ENCODE measurements at regions of chr17 and their contacts with region 1.

Region 1: DNA sequence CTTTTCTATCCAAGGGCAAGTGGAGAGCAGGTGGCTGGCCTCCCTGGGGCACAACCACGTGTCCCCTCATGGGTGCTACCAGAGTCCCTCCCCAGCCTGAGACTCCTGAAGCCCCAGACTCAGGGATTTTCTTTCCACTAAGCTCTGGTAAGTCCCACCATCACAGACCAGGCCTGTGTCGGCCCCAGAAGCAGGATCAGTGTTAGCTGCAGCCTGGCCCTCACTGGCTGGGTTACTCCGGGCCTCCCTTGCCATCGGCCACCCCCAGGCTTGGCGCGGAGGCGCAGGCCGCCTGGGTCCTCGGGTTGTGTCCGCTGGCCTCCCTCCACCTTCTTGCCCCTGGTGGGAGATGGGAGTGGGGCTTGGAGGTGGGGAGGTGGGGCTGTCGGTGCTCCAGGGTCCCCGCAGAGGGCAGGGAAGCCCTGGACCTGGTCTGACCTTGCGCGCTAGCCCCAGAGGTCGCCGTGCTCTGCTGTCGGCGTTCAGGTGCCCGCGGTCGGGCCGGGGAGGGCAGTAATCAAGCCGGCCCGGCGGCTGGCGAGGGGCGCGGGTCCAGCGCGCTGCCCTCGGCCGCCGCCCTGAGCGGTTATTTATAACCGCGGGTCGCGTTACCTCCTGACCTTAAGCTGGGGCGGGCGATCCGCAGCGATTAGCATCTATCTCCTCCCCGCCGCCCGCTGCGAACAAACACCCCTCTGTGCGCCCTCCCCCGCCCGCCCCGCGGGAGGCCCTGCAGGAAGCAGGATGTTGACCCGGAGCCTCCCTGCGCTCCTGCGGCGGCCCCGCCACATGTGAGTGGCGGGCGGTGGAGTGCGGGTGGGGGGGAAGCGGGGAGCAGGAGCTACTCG is 78.1 kb upstream of the TOB1 start:
- DNase-seq: peak; percentile 88
- ATAC-seq: peak; percentile 79

Region 2: DNA sequence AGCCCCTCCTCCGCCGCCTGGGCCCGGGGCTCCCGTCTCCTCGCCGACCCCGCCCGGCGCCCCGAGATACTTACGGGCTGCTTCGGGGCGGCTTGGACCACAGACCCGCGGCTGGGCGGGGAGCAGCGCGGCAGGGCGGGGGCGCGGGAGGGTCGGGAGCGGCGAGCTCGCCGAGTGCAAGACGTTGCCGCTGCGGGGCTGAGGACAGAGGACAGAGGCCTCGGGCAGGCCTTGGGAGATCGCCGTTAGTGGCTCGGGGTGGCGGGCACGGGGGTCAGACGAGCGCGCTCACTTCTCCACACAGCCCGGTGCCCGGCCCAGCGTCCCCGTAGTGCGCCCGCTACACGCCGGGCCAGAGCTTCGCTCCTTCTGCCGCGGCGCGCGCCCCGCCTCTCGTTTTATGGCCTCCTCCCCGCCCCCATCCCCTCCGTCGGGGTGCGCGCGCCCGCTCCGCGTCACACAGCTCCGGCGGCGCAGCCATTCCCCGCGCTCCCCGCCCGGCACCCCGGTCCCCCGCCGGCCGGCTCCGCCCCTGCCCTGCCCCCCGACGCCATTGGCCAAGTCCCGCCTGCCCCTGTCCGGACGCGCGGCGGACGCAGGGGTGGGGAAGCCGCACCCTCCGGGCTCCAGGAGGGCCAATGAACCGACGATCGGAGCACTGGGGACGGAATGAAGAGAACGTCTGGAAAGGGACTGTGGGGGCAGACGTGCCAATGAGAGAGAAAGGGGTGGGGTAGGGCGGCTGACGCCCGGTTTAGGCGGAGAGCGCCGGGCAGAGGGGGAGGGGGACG is 78.1 kb before region 1 on chr17 and contains the start of gene TOB1:
- intact Hi-C with region 1: loop called (anchors 2 kb)
- DNase-seq: peak; percentile 98
- ATAC-seq: peak; percentile 89
- total RNA-seq, gene TOB1: 83.8 TPM

Region 3: GRCh38 chr17:50976951-50977472 is 32.7 kb after region 1 on chr17:
- intact Hi-C with region 1: no loop called
- DNase-seq: no peak
- ATAC-seq: no peak

Region 4: DNA sequence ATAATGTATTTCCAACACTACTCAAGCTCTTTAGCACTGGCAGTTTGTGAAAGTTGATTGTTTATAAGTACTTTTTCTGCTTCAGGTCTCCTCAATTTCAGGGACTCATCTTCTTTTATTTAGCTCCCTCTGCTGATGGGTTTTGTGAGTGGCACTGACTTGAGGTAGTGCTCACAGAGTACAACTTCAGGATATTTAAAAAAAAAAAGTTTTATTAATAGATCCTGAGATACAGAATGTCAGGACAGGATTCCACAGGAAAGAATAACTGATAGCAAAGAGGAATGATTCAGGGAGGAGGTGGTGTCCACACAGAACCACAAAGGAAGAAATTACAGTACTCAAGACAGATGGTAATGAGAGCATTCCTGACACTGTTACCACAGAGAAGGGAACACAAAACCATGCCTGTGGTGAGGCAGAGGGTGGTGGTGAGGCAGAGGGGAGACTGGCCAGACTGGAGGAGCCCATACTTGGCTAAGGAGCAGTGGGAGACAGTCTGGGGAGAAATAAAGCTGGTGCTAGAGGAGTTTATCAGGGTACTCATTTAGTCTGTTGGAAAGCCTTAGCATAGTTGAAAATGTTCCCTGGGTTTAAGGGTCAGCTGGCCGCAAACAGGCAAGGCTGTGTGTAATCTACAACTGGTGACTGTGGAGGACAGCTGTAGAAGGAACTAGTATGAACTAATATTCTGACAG is 112.7 kb after region 1 on chr17:
- intact Hi-C with region 1: no loop called
- DNase-seq: no peak
- ATAC-seq: peak; percentile 89

Region 5: DNA sequence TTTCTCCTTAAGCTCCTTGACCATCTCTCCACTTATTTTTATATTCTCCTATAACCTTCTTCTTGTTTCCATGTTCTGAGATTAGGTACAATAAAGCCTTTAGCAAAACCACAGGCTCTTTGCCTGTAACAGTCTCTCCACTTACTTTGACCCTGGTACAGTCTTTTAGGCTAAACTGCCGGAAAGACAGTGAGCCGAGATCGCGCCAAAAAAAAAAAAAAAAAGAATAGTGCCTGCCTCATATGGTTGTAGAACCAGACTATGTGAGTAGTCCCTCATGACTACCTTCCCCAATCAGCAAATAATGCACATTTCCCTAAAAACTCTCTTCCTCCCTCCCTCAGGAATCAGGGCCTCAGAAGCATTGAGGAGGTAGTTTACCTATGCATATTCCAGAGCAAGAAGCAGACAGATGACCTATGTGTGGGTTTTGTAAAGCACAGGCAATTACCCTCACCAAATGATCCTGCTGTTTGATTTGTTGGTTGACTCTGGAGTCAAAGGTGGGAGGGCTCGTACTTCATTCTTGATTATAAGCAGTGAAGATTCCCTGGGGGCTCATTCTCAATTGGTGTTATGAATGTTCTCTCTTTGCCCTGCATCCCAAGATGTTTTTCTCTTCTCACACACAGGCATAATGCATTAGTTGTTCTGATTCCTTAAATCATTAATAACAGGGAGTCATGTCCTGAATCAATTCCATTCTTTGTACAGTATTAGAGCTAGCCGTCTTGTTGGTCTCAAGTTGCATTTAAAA is 200.2 kb after region 1 on chr17:
- intact Hi-C with region 1: no loop called
- DNase-seq: no peak
- ATAC-seq: no peak